Gastrocnemius medialis (tissue), 4 donors: ENCODE measurements at regions of chr7 and their contacts with region 1.

Region 1: DNA sequence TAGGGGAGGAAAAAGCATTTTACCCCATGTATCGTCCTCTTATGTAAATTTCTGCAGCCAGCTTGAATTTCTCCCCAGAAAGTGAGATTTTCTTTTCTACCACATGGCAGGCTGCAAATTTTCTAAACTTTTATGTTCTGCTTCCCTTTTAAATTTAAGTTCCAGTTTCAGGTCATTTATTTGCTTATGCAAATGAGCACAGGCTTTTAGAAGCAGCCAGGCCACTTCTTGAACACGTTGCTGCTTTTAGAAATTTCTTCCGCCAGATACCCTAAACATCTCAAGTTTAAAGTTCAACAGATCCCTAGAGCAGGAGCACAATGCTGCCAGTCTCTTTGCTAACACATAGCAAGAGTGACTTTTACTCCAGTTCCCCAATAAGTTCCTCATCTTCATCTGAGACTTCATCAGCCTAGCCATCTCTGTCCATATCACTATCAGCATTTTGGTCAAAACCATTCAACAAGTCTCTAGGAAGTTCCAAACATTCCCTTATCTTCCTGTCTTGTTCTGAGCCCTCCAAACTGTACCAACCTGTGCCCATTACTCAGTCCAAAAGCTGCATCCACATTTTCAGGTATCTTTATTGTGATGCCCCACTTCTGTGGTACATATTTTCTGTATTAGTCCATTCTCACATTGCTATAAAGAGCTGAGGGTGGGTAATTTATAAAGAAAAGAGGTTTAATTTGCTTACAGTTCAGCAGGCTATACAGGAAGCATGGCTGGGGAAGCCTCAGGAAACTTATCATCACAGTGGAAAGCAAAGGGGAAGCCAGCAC is 16.3 kb downstream of the EZH2 start:
- DNase-seq: no peak
- ATAC-seq: no peak
- H3K4me3 ChIP-seq: no peak overlapping the region
- H3K27ac ChIP-seq: no peak overlapping the region
- H3K4me1 ChIP-seq: no peaks in the 10 kb centered on the region
- H3K27me3 ChIP-seq: no peaks in the 10 kb centered on the region
- CTCF ChIP-seq: no peak
- POLR2A ChIP-seq: no peak

Region 2: GRCh38 chr7:148584154-148584827 is 283.5 kb before region 1 on chr7:
- in situ Hi-C with region 1: no loop called
- intact Hi-C with region 1: loop called (anchors 10 kb)
- DNase-seq: no peak
- ATAC-seq: no peak
- H3K4me3 ChIP-seq: no peak overlapping the region
- H3K27ac ChIP-seq: no peak overlapping the region
- H3K4me1 ChIP-seq: no peaks in the 10 kb centered on the region
- H3K27me3 ChIP-seq: no peaks in the 10 kb centered on the region
- CTCF ChIP-seq: no peak
- POLR2A ChIP-seq: no peak